PC-9 (cell line): ENCODE measurements at regions of chr2 and their contacts with region 1.

Region 1: GRCh38 chr2:57906152-57906732 is 140.4 kb upstream of the VRK2 start:
- DNase-seq: peak in 1 of 2 experiments; percentile 52
- H3K4me3 ChIP-seq: no peak overlapping the region
- H3K27ac ChIP-seq: no peak overlapping the region
- H3K4me1 ChIP-seq: no peaks in the 10 kb centered on the region
- H3K27me3 ChIP-seq: no peaks in the 10 kb centered on the region
- CTCF ChIP-seq: peak; percentile 93

Region 2: DNA sequence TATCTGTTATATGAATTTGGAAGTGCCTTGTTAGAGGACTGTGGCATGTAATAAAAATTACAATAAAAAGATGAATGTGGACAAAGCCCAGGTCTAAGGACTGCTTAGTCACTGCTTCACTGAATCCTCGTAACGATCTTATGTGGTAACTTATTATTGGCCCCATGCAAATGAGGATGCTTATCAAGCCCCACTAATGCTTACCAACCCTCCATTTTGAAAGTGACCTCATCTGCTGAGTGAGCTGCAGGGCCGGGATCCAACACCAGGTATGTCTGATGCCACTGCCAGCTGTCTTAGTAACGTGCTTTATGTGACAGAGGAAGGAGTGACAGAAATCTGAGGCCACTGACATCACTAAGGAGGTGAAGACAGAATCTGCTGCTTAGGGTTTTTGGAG is 1787.8 kb before region 1 on chr2:
- CTCF ChIA-PET with region 1: no interaction called
- POLR2A ChIA-PET with region 1: no interaction called
- intact Hi-C with region 1: no loop called
- DNase-seq: peak in 1 of 2 experiments; percentile 30
- H3K4me3 ChIP-seq: no peak overlapping the region
- H3K27ac ChIP-seq: no peak overlapping the region
- H3K4me1 ChIP-seq: no peaks in the 10 kb centered on the region
- H3K27me3 ChIP-seq: peaks cover 13% of the 10 kb centered on the region; the same call in 1 of the 2 replicates
- CTCF ChIP-seq: no peak

Region 3: GRCh38 chr2:57759822-57760300 is 146.4 kb before region 1 on chr2:
- CTCF ChIA-PET with region 1: no interaction called
- POLR2A ChIA-PET with region 1: no interaction called
- intact Hi-C with region 1: loop called (anchors 2 kb)
- DNase-seq: peak; percentile 61 to 88
- H3K4me3 ChIP-seq: peak overlapping the region; percentile 40; the same call in 1 of the 2 replicates
- H3K27ac ChIP-seq: no peak overlapping the region
- H3K4me1 ChIP-seq: 0 out of 2 replicates have a peak, but pooled peaks cover 5% of the 10 kb centered on the region
- H3K27me3 ChIP-seq: no peaks in the 10 kb centered on the region
- CTCF ChIP-seq: peak; percentile 98

Region 4: GRCh38 chr2:58046585-58047372 is 140.5 kb after region 1 on chr2 and contains the start of gene VRK2:
- CTCF ChIA-PET with region 1: interaction called, 3 read pairs
- POLR2A ChIA-PET with region 1: no interaction called
- intact Hi-C with region 1: loop called (anchors 5 kb)
- DNase-seq: peak; percentile 93 to 97
- H3K4me3 ChIP-seq: peak within 1 kb of the TSS; percentile 65
- H3K27ac ChIP-seq: peak within 1 kb of the TSS; percentile 81
- H3K4me1 ChIP-seq: peaks cover 41% of the 10 kb centered on the region
- H3K27me3 ChIP-seq: no peaks in the 10 kb centered on the region
- CTCF ChIP-seq: 0 out of 2 replicates have a peak, but pooled peaks have one; percentile 9
- total RNA-seq, gene VRK2: 32.7 and 42.8 TPM in 2 replicates

Region 5: GRCh38 chr2:58107803-58108710 is 201.8 kb after region 1 on chr2:
- CTCF ChIA-PET with region 1: no interaction called
- POLR2A ChIA-PET with region 1: no interaction called
- intact Hi-C with region 1: loop called (anchors 5 kb)
- DNase-seq: peak; percentile 53 to 98
- H3K4me3 ChIP-seq: peak overlapping the region; percentile 47
- H3K27ac ChIP-seq: peak overlapping the region; percentile 97
- H3K4me1 ChIP-seq: peaks cover 48% of the 10 kb centered on the region
- H3K27me3 ChIP-seq: no peaks in the 10 kb centered on the region
- CTCF ChIP-seq: no peak

Region 6: DNA sequence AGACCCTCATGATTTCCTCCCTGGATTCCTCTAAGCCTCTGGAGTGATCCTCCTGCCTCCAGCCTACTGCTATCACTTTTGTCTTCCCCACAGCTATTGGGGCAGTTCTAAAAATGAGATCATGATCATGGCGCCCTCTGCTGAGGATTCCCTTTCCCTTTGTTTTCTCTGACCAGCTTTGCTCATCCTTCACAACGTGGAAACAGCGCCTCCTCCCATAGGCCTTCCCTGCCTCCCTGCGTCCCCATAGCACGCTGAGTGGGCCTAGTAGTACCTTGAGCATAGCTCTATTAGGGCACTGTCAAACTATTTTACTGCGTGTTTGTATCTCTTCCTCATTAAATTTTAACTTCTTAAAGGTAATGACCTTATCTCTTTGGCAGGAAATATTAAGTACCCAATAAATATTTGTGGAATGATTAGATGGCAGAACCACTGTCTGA is 541.8 kb after region 1 on chr2:
- CTCF ChIA-PET with region 1: interaction called, 9 read pairs
- POLR2A ChIA-PET with region 1: no interaction called
- intact Hi-C with region 1: loop called (anchors 1 kb)
- DNase-seq: peak in 1 of 2 experiments; percentile 64
- H3K4me3 ChIP-seq: no peak overlapping the region
- H3K27ac ChIP-seq: no peak overlapping the region
- H3K4me1 ChIP-seq: no peaks in the 10 kb centered on the region
- H3K27me3 ChIP-seq: no peaks in the 10 kb centered on the region
- CTCF ChIP-seq: peak; percentile 70